HEK293T (cell line): ENCODE measurements at regions of chr6 and their contacts with region 1.

Region 1: DNA sequence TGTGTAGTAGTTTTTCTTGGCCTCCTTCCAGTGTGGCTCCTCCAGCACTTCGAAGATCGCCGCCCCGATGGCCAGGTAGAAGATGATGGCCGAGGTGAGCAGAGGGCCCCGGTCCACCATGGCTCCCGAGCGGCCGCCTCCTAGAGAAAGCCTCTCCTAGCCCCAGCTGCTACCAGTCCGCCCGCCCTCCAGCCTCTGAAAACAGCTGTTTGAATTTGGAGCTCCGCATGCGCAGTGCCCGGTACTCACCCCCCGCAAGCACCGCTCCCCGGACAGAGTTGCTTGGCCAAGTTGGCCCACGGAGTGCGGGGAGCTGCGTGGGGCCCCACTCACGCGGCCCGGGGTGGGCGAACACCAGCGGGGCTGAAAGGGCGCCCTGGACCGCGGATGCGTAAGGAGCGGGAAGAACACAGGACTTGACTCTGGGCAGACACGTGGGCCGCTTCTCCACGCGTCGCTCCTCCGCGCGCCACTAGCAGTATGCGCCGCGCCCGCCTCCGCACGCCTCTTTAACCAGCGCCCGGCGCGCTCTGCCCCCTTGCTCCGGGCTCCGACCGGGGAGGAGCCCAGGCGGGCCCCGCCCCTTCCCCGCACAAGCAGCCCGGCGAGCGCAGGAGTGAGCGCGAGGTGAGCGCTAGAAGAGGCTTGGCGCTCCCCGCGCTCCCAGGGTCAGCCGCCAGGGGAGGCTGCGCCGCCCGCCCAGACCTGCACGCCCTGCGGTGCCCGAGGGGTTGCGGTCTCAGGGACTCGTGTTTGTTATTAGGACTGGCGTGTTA is at the start of gene KCNK5:
- DNase-seq: peak; percentile 93

Region 2: GRCh38 chr6:39153766-39154397 is 75.3 kb before region 1 on chr6:
- CTCF ChIA-PET with region 1: no interaction called
- POLR2A ChIA-PET with region 1: no interaction called
- DNase-seq: no peak

Region 3: DNA sequence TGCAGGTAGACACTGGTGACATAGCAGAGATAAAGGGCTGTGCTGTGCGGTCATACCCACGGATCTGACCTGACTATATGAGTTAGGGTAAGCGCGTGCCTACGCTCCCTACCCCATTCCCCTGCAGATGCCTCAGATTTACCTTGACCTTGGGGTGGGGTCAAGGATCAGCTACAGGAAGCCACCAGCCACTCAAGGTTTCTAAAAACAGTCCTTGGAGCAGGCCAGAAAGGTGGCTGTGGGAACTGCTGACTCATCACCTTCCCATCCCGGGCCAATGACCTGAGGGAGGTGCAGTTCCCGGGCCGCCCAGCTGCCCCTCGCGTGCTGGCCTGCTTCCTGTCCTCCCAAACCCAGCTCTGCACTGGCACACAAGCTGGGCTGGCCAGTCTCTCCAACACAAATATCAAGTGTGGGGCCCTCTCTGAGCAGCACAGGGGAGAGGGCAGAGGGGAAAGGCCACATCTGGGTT is 22.9 kb before region 1 on chr6:
- CTCF ChIA-PET with region 1: no interaction called
- POLR2A ChIA-PET with region 1: no interaction called
- DNase-seq: no peak

Region 4: DNA sequence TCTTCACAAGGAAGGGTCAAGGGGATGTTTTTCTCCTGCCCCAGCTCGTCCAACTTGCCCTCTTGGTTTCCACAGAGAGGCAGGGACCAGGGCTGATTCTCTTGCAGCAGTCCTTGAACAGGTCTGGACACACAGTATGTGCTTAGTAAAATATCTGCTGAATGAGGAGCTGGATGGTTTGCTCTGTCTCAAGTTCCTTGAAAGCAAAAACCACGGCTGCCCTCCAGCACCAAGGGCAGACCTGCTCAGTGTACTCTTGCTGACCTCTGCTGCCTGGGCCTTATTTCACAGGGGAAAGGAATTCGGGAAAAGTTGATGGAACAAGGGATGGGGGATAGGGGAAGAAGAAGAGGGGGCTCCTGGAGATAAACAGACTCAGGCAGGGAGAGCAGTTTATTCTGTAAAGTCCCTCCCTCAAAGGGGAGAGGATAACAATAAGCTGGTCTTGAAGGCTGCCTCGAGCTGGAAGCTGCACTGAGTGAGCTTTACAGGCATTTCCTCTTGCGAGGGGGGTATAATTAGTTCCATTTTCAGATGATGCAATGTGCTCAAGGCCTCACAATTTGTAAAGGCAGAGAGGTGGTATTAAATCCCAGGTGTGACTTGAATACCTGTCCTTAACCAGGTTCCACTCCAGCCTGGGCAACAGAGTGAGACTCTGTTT is 10.2 kb before region 1 on chr6:
- CTCF ChIA-PET with region 1: no interaction called
- POLR2A ChIA-PET with region 1: interaction called, 12 read pairs
- DNase-seq: no peak

Region 5: GRCh38 chr6:39239527-39240154 is 10.5 kb after region 1 on chr6:
- CTCF ChIA-PET with region 1: interaction called, 10 read pairs
- POLR2A ChIA-PET with region 1: no interaction called
- DNase-seq: no peak